HEK293T (cell line): ENCODE measurements at regions of chr12 and their contacts with region 1.

Region 1: DNA sequence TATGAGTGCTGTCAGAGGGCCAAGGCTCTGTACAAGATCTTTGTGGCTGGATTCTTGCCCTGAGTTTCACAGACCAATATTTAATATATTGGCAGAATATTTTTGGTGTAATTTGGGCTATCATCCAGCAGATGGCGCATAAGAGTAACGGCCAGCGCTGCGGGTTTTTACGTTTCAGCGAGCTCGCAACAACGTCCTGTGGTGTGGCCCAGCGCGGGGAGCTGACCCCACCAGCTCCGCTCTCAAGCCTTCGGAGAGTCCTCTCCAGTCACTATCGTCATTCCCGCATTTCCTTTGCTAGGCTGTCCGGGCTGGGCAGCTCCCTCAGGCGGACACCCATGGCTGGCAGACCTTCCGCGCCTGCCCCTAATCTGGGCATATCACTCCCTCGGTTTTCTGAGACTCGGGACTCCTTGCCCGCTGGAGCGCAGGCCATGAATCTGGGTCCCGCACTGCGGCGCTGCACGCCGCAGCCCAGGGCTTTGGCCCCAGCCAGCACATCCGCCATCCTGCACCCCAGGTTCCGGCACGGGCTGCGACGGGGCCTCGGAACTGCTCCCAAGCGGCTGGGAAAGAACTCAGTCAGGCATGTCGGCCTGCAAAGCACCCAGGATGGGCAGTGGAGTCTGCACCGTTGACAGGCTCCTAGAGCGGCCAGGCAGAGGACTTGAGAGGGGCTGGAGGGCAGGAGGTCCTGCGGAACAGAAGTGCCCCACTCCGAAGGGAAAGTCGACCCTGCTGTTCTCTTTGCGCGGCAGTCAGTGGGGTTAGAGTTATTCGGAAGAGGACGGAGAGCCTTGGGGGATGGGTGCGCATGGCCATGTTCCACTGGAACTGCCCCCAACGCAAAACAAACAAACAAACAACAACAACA is 18.4 kb downstream of the OLR1 start:
- DNase-seq: peak; percentile 79

Region 2: DNA sequence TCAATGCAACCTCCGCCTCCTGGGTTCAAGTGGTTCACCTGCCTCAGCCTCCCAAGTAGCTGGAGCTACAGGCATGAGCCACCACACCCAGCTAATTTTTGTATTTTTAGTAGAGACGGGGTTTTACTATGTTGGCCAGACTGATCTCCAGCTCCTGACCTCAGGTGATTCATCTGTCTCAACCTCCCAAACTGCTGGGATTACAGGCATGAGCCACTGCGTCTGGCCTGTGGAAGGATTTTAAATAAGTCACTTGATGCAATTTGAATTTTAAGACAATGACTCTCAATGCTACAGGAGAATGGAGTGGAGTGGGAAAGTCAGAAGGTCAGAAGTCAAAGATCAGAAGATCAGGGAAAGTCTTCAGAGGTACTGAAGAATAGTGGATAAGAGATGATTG is 40.7 kb after region 1 on chr12:
- CTCF ChIA-PET with region 1: interaction called, 10 read pairs
- POLR2A ChIA-PET with region 1: no interaction called
- DNase-seq: no peak